ENCODE measurements at regions of chr12 and their contacts with region 1.

Region 1: GRCh38 chr12:14845350-14845750 is 2.0 kb upstream of the ART4 start:
- DNase-seq: peak; percentile 63
- H3K4me3 Mint-ChIP-seq: no peak overlapping the region
- H3K27ac Mint-ChIP-seq: no peak overlapping the region
- H3K4me1 Mint-ChIP-seq: peaks cover 9% of the 10 kb centered on the region
- H3K27me3 Mint-ChIP-seq: no peaks in the 10 kb centered on the region

Region 2: DNA sequence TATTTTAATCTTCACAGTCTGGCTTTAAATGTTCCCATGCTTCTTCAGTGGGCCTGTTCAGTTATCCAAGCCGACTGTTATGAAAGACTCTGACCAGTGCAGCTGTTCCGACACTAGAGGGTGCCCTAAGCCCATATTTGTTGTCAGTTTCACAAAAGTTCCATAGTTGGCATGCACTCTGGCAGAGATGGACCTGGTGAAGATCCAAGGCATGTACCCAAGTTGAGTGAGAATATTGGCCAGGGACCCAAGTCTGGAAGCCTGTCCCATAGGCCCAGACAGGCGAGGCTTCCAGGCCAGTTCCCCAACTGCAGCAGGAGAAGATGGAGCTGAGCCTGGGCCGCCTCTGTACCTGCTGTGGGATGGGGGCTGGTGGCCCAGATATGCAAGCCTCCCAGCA is 121.6 kb before region 1 on chr12:
- CTCF ChIA-PET with region 1: interaction called, 9 read pairs
- intact Hi-C with region 1: loop called (anchors 1 kb)
- DNase-seq: peak; percentile 74
- H3K4me3 Mint-ChIP-seq: no peak overlapping the region
- H3K27ac Mint-ChIP-seq: no peak overlapping the region
- H3K4me1 Mint-ChIP-seq: no peaks in the 10 kb centered on the region
- H3K27me3 Mint-ChIP-seq: no peaks in the 10 kb centered on the region

Region 3: DNA sequence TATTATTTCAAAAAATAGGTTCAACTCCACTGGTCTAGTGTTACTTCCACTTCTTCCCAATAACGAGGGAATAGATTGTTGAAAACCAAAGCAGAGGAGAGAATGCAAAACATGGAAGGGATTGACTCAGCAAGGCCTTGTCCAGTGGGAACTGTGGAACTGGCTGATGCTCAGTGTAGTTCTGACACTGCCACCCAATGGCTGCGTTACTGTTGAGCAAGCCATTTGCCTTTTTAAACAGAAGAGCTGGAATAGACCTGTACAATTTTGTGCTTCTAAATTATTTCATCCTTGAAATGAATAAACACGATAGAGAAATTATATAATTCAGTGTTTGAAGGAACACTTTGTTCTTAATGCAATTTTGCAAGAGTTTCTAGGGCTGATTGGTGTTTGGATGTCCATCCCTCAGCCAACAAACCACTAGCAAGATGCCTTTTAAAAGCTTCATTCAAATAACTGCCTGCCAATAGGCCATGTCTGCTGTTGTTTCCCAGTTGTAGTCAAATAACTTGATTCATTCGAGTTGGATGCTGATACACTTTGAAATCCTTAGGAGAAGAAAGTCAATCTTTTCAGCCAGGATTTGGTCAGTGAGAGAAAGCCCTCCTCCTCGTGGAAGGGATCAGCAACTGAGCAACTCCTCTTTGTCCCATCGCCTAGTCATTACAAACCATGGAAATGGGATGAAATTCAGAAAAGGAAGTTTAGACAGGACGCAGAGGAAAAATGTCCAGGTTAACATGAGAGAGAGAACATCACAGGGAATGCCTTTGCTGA is 47.6 kb after region 1 on chr12:
- CTCF ChIA-PET with region 1: interaction called, 3 read pairs
- intact Hi-C with region 1: loop called (anchors 5 kb)
- DNase-seq: no peak
- H3K4me3 Mint-ChIP-seq: no peak overlapping the region
- H3K27ac Mint-ChIP-seq: no peak overlapping the region
- H3K4me1 Mint-ChIP-seq: no peaks in the 10 kb centered on the region
- H3K27me3 Mint-ChIP-seq: no peaks in the 10 kb centered on the region

Region 4: DNA sequence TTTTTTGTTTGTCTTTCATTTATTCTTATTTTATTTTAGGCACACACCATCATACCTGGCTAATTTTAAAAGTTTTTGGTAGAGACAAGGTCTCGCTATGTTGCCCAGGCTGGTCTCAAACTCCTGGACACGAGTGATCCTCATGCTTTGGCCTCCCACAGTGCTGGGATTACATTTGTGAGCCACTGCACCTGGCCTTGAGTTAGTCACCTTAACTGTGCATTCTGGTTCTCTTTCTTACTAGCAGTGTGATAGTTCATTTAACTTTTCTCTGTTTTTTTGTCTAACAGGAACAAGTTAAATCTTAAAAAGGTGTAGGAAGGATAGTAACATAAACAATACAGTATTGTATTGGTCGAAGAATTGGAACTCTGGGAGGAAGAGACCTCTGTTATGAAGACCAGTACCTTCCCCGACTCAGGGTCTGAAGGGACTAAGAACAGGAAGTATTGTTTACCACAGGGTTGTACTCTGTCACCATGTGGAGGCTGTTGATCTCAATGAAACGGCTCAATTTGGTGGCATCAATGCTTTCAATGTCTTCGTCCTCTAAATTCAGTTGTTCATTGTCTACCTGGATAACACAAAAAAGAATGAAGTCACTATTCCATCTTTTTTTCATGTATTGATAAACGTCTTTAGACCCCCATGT is 75.3 kb after region 1 on chr12:
- CTCF ChIA-PET with region 1: no interaction called
- intact Hi-C with region 1: loop called (anchors 5 kb)
- DNase-seq: peak; percentile 26
- H3K4me3 Mint-ChIP-seq: no peak overlapping the region
- H3K27ac Mint-ChIP-seq: no peak overlapping the region
- H3K4me1 Mint-ChIP-seq: peaks cover 18% of the 10 kb centered on the region
- H3K27me3 Mint-ChIP-seq: no peaks in the 10 kb centered on the region

Region 5: GRCh38 chr12:15268927-15269552 is 423.7 kb after region 1 on chr12:
- CTCF ChIA-PET with region 1: no interaction called
- intact Hi-C with region 1: loop called (anchors 1 kb)
- DNase-seq: peak; percentile 56
- H3K4me3 Mint-ChIP-seq: no peak overlapping the region
- H3K27ac Mint-ChIP-seq: no peak overlapping the region
- H3K4me1 Mint-ChIP-seq: no peaks in the 10 kb centered on the region
- H3K27me3 Mint-ChIP-seq: no peaks in the 10 kb centered on the region

Region 6: GRCh38 chr12:15522565-15523187 is 677.3 kb after region 1 on chr12:
- CTCF ChIA-PET with region 1: no interaction called
- intact Hi-C with region 1: loop called (anchors 10 kb)
- DNase-seq: no peak
- H3K4me3 Mint-ChIP-seq: no peak overlapping the region
- H3K27ac Mint-ChIP-seq: no peak overlapping the region
- H3K4me1 Mint-ChIP-seq: peaks cover 4% of the 10 kb centered on the region
- H3K27me3 Mint-ChIP-seq: peaks cover 14% of the 10 kb centered on the region